Posterior vena cava (tissue), 2 donors: ENCODE measurements at regions of chr10 and their contacts with region 1.

Region 1: DNA sequence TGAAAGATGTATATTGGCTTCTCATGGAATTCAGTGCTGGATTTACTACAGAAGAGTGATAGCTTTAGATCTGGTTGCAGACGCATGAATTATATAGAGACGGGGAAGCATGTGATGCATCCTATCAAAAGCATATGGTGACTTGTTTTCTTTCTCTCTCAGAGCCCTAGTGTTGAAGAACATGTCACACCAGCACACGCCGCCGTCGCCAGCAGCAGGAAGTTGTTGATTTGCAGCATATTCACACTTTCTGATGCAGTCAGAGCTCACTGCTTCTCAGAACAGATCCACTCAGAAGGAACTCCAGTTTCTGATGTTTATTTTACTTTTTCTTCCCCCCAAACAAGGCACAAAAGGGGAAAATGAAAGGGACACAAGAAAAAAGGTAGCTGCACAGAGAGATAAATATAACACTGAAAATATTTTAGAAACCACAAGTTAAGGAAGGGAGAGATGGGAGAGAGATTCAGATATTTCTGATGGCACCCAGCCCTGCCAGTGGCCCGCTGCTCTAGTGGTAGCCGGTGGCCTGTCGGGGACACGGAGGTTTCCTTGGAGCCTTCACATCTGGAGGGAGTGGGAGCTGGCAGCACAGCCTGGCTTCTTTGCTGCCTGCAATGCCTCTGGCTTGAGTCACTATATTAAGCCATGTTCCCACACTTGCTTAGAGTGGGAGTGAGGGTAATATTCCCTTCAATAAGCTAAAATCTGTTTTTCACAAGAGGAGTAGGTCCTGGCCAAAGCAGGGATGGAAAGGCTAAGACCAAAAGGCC is 123.2 kb downstream of the NRP1 start:
- DNase-seq: peak; percentile 87

Region 2: DNA sequence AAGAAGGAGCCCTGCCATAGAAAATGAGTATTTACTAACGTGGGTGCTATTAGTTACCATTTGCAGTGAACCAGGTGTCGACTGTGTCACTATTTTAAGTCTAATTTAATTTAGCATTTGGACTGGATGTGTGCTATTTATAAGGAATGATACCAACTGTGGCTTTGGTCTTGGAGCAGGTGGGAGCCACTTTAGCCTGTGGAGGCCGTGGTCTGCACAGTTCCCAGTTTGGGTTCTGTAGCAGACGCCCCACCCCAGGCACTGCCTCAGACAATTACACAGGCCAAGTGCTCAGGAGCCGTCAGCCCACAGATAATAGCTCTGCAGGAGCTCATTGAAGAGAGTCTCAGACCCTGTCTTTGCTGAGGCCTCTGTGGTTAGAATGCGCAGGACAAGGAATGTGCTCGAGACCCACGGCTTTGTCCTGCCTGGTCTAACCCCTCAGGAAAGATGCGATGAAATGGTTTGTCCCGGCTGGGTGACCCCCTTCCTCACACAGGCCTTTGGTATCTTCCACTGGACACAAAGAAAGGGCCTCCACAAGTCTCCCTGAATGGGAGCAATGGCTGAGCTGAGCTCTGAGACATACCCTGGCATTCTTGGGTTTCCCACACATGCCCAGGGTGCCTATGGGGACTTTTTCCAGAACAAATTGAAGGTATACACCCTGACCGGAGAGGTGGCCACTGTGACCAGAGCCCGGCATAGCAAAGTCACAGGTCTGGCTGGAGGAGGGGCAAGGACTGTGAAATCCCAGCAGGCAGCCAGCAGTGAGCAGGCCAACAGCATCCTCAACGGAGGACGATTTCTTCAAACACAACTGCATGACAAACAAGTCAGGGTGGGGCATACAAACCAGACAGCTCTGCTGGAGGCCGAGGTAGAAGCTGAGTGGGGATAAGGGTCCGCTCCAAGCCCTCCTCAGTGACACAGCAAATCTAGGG is 1533.8 kb before region 1 on chr10:
- intact Hi-C with region 1: no loop called
- DNase-seq: no peak

Region 3: GRCh38 chr10:33273295-33274002 is 62.2 kb after region 1 on chr10:
- intact Hi-C with region 1: loop called in 1 of 2 experiments (anchors 10 kb)
- DNase-seq: peak; percentile 94